Panc1 (cell line): ENCODE measurements at regions of chr15 and their contacts with region 1.

Region 1: GRCh38 chr15:71743861-71744382 is 66.4 kb upstream of the NR2E3 start:
- DNase-seq: no peak
- ATAC-seq: no peak
- H3K4me3 ChIP-seq: no peak overlapping the region
- H3K27ac ChIP-seq: no peak overlapping the region
- H3K4me1 ChIP-seq: peaks cover 24% of the 10 kb centered on the region
- H3K27me3 ChIP-seq: no peaks in the 10 kb centered on the region
- CTCF ChIP-seq: peak; percentile 84

Region 2: GRCh38 chr15:70559265-70560239 is 1184.4 kb before region 1 on chr15:
- CTCF ChIA-PET with region 1: no interaction called
- POLR2A ChIA-PET with region 1: no interaction called
- in situ Hi-C with region 1: no loop called
- intact Hi-C with region 1: no loop called
- DNase-seq: no peak
- ATAC-seq: no peak
- H3K4me3 ChIP-seq: no peak overlapping the region
- H3K27ac ChIP-seq: no peak overlapping the region
- H3K4me1 ChIP-seq: no peaks in the 10 kb centered on the region; the same call in 1 of the 2 replicates
- H3K27me3 ChIP-seq: no peaks in the 10 kb centered on the region
- CTCF ChIP-seq: no peak

Region 3: DNA sequence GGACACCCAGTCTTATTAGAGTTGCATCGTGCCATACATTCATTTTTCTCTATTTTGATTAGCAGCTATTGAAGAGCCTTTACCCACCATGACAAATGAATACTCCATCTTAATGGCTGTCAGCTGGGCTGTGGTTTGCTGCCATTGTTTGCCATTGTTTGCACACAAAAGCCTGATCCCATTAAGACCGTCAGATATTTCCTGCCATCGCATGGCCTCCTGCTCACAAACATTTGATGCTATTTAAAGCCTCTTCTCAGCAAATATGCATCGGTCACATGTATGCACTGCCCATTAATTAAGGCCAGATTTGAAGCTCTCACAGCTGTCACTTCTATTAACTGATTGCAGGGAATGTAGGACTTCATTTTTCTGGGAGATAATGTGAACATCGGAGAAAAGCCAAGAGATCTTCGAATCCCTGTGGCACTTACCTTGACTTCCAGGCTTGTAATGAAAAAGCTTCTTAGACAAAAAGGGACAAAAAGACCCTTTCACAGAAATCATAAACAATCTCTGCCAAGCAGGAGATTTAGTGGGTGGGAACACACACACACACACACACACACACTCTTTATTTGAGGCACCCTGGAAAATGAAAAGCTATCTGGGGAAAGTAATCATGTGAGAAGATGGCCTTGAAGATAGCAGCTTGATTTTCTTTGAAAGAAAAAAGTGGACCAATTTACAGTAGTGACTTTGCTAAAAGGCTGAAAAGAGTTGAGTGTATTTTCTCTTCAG is 108.9 kb before region 1 on chr15:
- CTCF ChIA-PET with region 1: interaction called, 13 read pairs
- POLR2A ChIA-PET with region 1: no interaction called
- in situ Hi-C with region 1: no loop called
- intact Hi-C with region 1: no loop called
- DNase-seq: no peak
- ATAC-seq: no peak
- H3K4me3 ChIP-seq: no peak overlapping the region
- H3K27ac ChIP-seq: no peak overlapping the region
- H3K4me1 ChIP-seq: no peaks in the 10 kb centered on the region; the same call in 1 of the 2 replicates
- H3K27me3 ChIP-seq: no peaks in the 10 kb centered on the region
- CTCF ChIP-seq: no peak

Region 4: GRCh38 chr15:71657141-71657540 is 86.8 kb before region 1 on chr15:
- CTCF ChIA-PET with region 1: interaction called, 13 read pairs
- POLR2A ChIA-PET with region 1: no interaction called
- in situ Hi-C with region 1: no loop called
- intact Hi-C with region 1: no loop called
- DNase-seq: no peak
- ATAC-seq: no peak
- H3K4me3 ChIP-seq: no peak overlapping the region
- H3K27ac ChIP-seq: no peak overlapping the region
- H3K4me1 ChIP-seq: no peaks in the 10 kb centered on the region
- H3K27me3 ChIP-seq: no peaks in the 10 kb centered on the region
- CTCF ChIP-seq: no peak

Region 5: DNA sequence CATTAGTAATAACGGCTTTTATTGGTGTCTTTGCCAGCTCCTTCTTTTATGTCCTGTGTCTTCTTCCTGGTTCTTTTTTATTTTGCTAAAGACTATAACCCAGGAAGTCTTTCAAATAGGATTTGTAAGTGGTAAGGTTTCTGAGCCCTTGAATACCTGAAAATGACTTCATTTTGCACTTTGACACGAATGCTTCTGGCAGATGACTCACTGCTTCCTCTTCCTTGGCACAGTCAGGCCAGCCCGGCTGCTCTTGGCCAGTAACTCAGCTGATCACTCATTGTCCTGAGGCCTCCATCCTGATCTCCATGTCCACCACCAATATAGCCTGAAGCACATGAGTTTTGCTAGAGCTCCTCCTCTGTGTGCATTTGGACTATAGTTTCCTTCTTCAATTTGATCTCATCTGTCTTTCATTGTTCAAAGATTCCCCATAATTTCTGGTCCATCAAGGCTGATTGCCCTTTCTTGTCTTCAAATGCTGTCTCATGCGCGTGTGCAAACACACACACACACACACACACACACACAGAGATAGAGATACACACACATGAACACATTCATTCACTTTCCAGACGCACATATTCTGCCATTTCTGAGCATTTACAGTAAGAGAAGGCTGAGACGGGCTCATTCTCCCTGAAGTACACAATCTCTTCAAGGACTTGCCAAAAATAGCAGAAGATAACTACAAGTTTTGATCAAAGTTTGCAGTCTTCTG is 17.9 kb after region 1 on chr15:
- CTCF ChIA-PET with region 1: no interaction called
- POLR2A ChIA-PET with region 1: no interaction called
- in situ Hi-C with region 1: no loop called
- intact Hi-C with region 1: no loop called
- DNase-seq: no peak
- ATAC-seq: peak; percentile 96
- H3K4me3 ChIP-seq: no peak overlapping the region
- H3K27ac ChIP-seq: no peak overlapping the region
- H3K4me1 ChIP-seq: no peaks in the 10 kb centered on the region
- H3K27me3 ChIP-seq: no peaks in the 10 kb centered on the region
- CTCF ChIP-seq: no peak

Region 6: GRCh38 chr15:71800835-71801745 is 57.2 kb after region 1 on chr15:
- CTCF ChIA-PET with region 1: interaction called, 22 read pairs
- POLR2A ChIA-PET with region 1: interaction called, 5 read pairs
- in situ Hi-C with region 1: no loop called
- intact Hi-C with region 1: loop called (anchors 5 kb)
- DNase-seq: peak; percentile 64
- ATAC-seq: peak; percentile 89
- H3K4me3 ChIP-seq: no peak overlapping the region
- H3K27ac ChIP-seq: no peak overlapping the region; the same call in 1 of the 2 replicates
- H3K4me1 ChIP-seq: peaks cover 16% of the 10 kb centered on the region
- H3K27me3 ChIP-seq: no peaks in the 10 kb centered on the region
- CTCF ChIP-seq: peak; percentile 87

Region 7: DNA sequence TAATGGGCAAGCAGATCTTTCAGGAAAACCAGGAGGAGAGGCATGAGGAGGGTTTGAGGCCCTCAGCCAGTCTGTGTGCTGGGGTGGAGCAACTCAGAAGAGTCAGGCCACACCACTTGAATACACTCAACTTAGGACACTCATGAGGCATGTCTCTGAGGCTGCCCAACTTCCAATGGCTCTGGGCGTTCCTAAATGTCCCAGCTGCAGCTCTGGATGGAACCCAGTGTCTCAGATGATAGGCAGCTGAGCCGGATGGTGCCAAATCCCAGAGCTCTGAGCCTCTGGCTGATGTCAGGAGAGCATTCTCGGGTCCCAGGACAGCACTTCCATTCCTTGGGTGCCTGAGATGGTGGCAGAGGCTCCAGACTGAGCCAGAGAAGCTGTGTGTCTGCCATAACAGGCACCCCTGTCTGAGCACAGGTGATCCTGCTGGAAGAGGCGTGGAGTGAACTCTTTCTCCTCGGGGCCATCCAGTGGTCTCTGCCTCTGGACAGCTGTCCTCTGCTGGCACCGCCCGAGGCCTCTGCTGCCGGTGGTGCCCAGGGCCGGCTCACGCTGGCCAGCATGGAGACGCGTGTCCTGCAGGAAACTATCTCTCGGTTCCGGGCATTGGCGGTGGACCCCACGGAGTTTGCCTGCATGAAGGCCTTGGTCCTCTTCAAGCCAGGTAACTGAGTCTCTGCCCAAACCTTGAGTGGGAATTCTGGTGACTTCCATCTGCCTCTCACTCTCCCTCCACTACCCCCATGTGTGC is 69.2 kb after region 1 on chr15:
- CTCF ChIA-PET with region 1: interaction called, 10 read pairs
- POLR2A ChIA-PET with region 1: no interaction called
- in situ Hi-C with region 1: no loop called
- intact Hi-C with region 1: no loop called
- DNase-seq: no peak
- ATAC-seq: no peak
- H3K4me3 ChIP-seq: no peak overlapping the region
- H3K27ac ChIP-seq: no peak overlapping the region
- H3K4me1 ChIP-seq: no peaks in the 10 kb centered on the region; the same call in 1 of the 2 replicates
- H3K27me3 ChIP-seq: no peaks in the 10 kb centered on the region
- CTCF ChIP-seq: no peak

Region 8: DNA sequence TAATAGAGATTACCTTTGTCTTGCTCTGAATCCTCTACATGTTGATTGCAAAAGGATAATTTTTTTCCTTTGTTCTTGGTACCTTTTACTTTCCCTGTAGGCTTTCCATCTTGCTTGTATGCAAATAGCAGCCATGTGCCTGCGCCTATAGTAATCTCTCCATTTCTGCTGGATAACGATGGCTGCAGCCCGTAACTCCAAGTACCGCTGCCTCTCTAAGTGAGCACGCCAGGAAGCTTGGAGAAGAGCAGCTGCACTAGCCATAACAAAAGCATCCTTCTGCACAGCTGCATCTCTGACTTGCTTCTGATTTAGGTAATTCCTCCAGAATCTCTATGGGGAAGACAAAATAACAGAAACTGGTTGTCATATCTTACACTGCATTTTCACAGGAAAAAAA is 155.8 kb after region 1 on chr15:
- CTCF ChIA-PET with region 1: no interaction called
- POLR2A ChIA-PET with region 1: no interaction called
- in situ Hi-C with region 1: no loop called
- intact Hi-C with region 1: no loop called
- DNase-seq: no peak
- ATAC-seq: no peak
- H3K4me3 ChIP-seq: no peak overlapping the region
- H3K27ac ChIP-seq: no peak overlapping the region
- H3K4me1 ChIP-seq: no peaks in the 10 kb centered on the region
- H3K27me3 ChIP-seq: no peaks in the 10 kb centered on the region
- CTCF ChIP-seq: no peak

Region 9: DNA sequence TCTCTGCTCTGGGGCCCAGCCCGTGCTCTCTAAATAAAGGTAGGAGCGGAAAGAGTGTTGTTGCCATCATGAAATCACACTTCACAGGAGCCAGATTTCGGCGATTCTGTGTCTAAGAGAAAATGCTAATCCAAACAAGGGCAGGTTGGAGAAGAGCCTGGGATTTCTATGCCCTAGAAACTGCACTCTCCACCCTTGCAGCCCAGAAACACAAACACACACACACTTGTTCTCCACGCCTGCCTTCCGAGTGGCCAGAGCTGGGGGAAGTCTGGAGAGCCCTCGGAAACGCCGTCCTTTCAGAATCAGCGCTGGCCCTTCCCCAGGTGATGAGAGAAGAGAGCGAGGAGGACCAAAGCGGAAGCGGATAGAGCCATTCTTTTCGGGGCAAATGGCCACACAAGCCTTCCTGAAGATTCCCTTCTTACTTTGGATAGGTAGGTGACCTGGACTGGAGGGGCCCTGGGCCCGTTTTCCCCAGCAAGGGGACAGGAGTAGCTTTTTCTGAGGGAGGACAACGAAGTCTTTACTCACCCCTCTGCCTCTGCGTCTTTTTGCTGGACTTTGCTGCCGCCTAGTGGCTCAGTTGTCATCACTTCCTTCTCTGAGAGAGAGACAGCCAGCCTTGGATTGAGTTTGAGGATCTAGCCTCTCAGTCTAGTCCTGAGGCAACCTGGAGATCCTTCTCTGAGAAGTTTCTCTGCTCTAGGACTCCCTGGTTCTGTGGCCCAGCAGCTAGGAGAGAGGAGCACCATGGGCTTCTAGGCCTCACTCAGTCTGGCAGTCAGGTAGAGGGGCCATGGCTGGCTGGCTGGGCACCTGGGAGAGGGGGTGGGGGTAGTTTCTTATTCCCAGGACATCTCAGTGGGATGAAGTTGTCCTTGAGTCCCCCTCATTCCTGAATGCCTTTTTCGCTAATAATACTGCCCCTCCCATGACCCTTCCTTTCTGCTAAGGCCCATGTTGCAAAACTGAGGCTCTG is 412.0 kb after region 1 on chr15:
- CTCF ChIA-PET with region 1: interaction called, 15 read pairs
- POLR2A ChIA-PET with region 1: no interaction called
- in situ Hi-C with region 1: no loop called
- intact Hi-C with region 1: loop called (anchors 10 kb)
- DNase-seq: peak; percentile 81
- ATAC-seq: peak; percentile 98
- H3K4me3 ChIP-seq: peak overlapping the region; percentile 45 to 72
- H3K27ac ChIP-seq: peak overlapping the region; percentile 32; the same call in 1 of the 2 replicates
- H3K4me1 ChIP-seq: peaks cover 8% of the 10 kb centered on the region
- H3K27me3 ChIP-seq: no peaks in the 10 kb centered on the region
- CTCF ChIP-seq: peak; percentile 90